ENCODE measurements at regions of chr19 and their contacts with region 1.

Region 1: GRCh38 chr19:7104747-7105447 is 35.4 kb downstream of the ZNF557 start:
- DNase-seq: peak in 20 of 42 donors; percentile 18 to 51 (median 28)

Region 2: DNA sequence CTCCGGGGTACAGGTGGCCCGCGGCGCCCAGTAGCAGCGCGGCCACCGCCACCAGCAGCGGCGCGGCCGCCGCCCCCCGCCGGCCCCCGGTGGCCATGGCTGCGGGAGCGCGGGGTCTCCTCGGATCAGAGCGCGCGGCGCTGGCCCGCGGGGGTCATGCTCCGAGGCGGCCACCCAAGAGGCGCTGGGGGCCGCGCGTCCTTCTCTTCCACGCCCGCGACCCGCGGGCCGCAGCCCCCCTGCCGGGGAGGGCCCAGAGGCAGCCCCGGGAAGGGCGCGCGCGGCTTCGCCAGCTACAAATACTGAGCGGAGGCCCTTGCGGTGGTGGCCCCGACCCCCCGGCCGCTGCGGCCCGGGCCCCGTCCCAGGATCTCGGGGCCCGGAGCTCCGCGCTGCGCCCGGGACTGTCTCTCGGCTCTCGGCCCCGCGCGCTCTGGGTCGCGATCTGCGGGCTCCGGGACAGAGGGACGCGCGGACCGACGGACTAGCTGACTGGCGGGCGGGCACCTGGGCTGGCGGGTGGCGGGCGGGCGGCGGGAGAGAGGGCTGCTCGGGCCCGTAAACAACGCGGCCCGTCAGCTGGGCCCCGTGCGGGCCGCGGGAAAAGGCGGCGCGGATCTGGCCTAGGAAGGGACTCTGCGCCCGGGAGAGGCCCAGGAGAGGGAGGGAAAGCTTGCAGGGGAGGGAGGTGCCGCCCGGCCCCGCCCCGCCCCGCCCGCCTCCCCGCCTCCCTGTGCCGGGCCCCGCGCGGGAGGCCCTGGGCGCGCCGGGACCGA is 189.1 kb after region 1 on chr19 and contains the start of gene INSR:
- intact Hi-C with region 1: loop called (anchors 10 kb)
- DNase-seq: peak; percentile 69 to 95 (median 90)

Region 3: GRCh38 chr19:7340959-7341837 is 236.3 kb after region 1 on chr19:
- intact Hi-C with region 1: loop called (anchors 5 kb)
- DNase-seq: peak; percentile 31 to 95 (median 87)